MCF 10A (cell line): ENCODE measurements at regions of chr3 and their contacts with region 1.

Region 1: GRCh38 chr3:69855436-69856162 is 116.3 kb downstream of the MITF start:
- DNase-seq: peak; percentile 31
- H3K4me3 Mint-ChIP-seq: no peak overlapping the region
- H3K27ac Mint-ChIP-seq: no peak overlapping the region
- H3K4me1 Mint-ChIP-seq: no peaks in the 10 kb centered on the region
- H3K27me3 Mint-ChIP-seq: no peaks in the 10 kb centered on the region
- CTCF ChIP-seq: peak; percentile 12

Region 2: GRCh38 chr3:69700949-69701348 is 154.7 kb before region 1 on chr3:
- CTCF ChIA-PET with region 1: interaction called, 74 read pairs
- POLR2A ChIA-PET with region 1: no interaction called
- intact Hi-C with region 1: no loop called
- DNase-seq: no peak
- H3K4me3 Mint-ChIP-seq: no peak overlapping the region
- H3K27ac Mint-ChIP-seq: no peak overlapping the region
- H3K4me1 Mint-ChIP-seq: no peaks in the 10 kb centered on the region
- H3K27me3 Mint-ChIP-seq: no peaks in the 10 kb centered on the region
- CTCF ChIP-seq: no peak

Region 3: DNA sequence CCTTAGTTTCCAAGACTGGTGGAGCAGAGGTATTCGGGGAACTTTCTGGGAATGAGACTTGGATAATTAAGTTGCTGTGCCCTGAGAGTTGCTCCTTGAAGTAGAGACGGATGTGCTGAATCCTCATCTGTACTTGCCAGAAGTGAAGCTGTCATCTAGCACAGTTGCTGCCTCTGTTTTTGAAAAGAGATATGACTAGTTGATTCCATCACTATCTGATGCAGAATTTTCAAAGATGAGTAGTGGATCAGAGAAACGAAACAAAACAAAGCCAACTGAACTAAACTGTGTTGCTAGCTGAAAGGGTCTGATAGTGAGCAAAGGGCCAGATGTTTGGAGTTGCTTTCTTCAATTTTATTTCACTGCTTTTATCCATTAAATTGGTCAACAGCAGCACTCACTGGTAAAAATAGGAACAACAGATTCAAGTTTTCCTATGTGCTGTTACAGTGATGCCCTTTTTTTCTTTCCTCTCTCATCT is 63.6 kb before region 1 on chr3:
- CTCF ChIA-PET with region 1: interaction called, 9 read pairs
- POLR2A ChIA-PET with region 1: interaction called, 4 read pairs
- intact Hi-C with region 1: loop called (anchors 5 kb)
- DNase-seq: peak; percentile 44
- H3K4me3 Mint-ChIP-seq: no peak overlapping the region
- H3K27ac Mint-ChIP-seq: no peak overlapping the region
- H3K4me1 Mint-ChIP-seq: peaks cover 25% of the 10 kb centered on the region
- H3K27me3 Mint-ChIP-seq: no peaks in the 10 kb centered on the region
- CTCF ChIP-seq: peak; percentile 71

Region 4: GRCh38 chr3:69865920-69866679 is 10.5 kb after region 1 on chr3:
- CTCF ChIA-PET with region 1: interaction called, 31 read pairs
- POLR2A ChIA-PET with region 1: no interaction called
- intact Hi-C with region 1: no loop called
- DNase-seq: peak; percentile 9
- H3K4me3 Mint-ChIP-seq: peak overlapping the region; percentile 51
- H3K27ac Mint-ChIP-seq: peak overlapping the region; percentile 54
- H3K4me1 Mint-ChIP-seq: peaks cover 40% of the 10 kb centered on the region
- H3K27me3 Mint-ChIP-seq: no peaks in the 10 kb centered on the region
- CTCF ChIP-seq: no peak

Region 5: GRCh38 chr3:70774641-70775040 is 919.0 kb after region 1 on chr3:
- CTCF ChIA-PET with region 1: no interaction called
- POLR2A ChIA-PET with region 1: no interaction called
- intact Hi-C with region 1: no loop called
- DNase-seq: no peak
- H3K4me3 Mint-ChIP-seq: no peak overlapping the region
- H3K27ac Mint-ChIP-seq: no peak overlapping the region
- H3K4me1 Mint-ChIP-seq: no peaks in the 10 kb centered on the region
- H3K27me3 Mint-ChIP-seq: peaks cover 59% of the 10 kb centered on the region
- CTCF ChIP-seq: no peak